ENCODE measurements at regions of chr2 and their contacts with region 1.

Region 1: GRCh38 chr2:88669371-88670214 is 21.9 kb upstream of the RPIA start:
- DNase-seq: peak; percentile 72
- ATAC-seq: peak; percentile 78
- H3K4me3 ChIP-seq: no peak overlapping the region
- H3K4me3 Mint-ChIP-seq: no peak overlapping the region
- H3K27ac ChIP-seq: no peak overlapping the region
- H3K27ac Mint-ChIP-seq: no peak overlapping the region
- H3K4me1 ChIP-seq: peaks cover 0 to 3% of the 10 kb centered on the region in 2 donors
- H3K4me1 Mint-ChIP-seq: peaks cover 5% of the 10 kb centered on the region
- H3K27me3 ChIP-seq: no peaks in the 10 kb centered on the region
- H3K27me3 Mint-ChIP-seq: no peaks in the 10 kb centered on the region
- CTCF ChIP-seq: peak; percentile 81

Region 2: GRCh38 chr2:88055371-88056128 is 614.0 kb before region 1 on chr2 and contains the start of gene KRCC1:
- CTCF ChIA-PET with region 1: interaction called, 5 read pairs
- POLR2A ChIA-PET with region 1: no interaction called
- intact Hi-C with region 1: loop called (anchors 5 kb)
- DNase-seq: peak; percentile 97
- ATAC-seq: peak; percentile 95
- H3K4me3 ChIP-seq: peak within 1 kb of the TSS; percentile 73 to 95 (median 89)
- H3K4me3 Mint-ChIP-seq: peak within 1 kb of the TSS; percentile 98
- H3K27ac ChIP-seq: peak within 1 kb of the TSS; percentile 95 to 96
- H3K27ac Mint-ChIP-seq: peak within 1 kb of the TSS; percentile 97
- H3K4me1 ChIP-seq: peaks cover 20 to 22% of the 10 kb centered on the region in 2 donors
- H3K4me1 Mint-ChIP-seq: peaks cover 39% of the 10 kb centered on the region
- H3K27me3 ChIP-seq: no peaks in the 10 kb centered on the region
- H3K27me3 Mint-ChIP-seq: no peaks in the 10 kb centered on the region
- CTCF ChIP-seq: no peak
- total RNA-seq, gene KRCC1: 27.1 and 27.2 TPM in 2 replicates

Region 3: DNA sequence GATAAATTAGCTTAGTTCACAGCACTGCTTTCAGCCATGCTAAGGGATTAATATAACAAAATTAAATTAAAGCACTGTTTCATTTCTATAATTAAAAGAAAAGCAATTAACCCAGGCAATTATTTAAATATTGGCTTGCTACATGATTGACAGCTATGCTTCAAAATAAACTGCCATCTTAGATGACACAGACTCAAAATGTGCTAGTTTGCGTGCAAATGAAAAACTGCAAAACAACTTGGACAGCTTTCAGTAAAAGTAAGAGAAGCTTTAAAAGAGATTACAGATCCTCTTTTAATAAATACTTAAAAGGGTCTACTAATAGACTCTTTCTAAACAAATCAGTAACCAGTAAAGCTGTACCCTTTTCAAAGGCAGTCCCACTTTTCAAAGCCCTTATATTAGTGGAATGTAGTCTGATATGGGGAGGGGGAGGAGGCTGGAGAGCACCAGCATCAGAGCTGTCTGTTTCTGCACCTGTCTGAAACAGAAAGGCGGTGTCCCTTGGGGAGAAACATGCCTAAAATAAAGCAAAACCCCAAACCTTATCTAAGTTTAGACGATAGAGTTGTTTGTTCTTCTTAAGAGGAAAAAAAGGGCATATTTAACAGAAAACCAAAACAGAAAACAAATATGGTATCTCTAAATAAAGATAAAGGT is 63.1 kb before region 1 on chr2:
- CTCF ChIA-PET with region 1: interaction called, 52 read pairs
- POLR2A ChIA-PET with region 1: no interaction called
- intact Hi-C with region 1: no loop called
- DNase-seq: peak; percentile 72
- ATAC-seq: peak; percentile 93
- H3K4me3 ChIP-seq: peak overlapping the region in 2 of 5 experiments; percentile 1 to 28
- H3K4me3 Mint-ChIP-seq: peak overlapping the region; percentile 57
- H3K27ac ChIP-seq: peak overlapping the region; percentile 86 to 94
- H3K27ac Mint-ChIP-seq: peak overlapping the region; percentile 94
- H3K4me1 ChIP-seq: peaks cover 78 to 89% of the 10 kb centered on the region in 2 donors
- H3K4me1 Mint-ChIP-seq: peaks cover 76% of the 10 kb centered on the region
- H3K27me3 ChIP-seq: no peaks in the 10 kb centered on the region
- H3K27me3 Mint-ChIP-seq: no peaks in the 10 kb centered on the region
- CTCF ChIP-seq: no peak

Region 4: DNA sequence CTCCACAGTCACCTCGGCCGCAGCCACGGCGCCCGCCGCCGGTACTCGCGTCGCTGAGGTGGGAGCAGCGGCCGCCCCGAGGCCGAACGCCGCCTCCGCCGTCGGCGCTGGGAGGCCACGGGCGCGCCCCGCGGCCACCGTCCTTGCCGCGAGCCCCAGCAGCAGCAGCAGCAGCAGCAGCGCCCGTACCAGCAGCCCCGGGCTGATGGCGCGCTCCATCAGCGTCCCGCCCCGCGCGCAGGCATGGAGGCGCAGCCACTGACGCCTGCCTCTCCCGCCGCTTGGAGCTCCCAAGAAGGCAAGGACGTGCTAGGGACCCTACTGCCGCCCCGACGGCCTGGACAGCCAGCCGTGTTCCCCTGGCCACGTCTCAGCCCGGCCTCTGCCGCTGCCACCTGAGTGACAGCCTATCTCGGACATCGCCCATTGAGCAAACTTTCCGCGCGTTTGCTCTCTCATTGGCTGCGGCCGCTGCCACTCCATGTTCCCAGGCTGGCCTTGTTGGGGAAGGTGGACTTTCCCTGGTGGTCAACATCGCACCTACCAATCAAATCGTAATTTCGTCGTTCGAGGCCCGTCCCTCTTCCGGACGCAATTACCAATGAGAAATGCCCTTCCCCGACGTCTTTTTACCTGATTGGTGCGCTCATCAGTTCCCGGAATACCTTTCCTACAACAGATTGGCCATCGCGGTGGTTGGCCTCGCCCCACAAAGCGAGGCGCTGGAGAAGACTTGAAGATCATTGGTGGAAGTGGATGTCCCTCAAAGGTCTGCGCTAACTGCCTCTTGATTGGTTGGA is 42.3 kb before region 1 on chr2 and contains the start of gene EIF2AK3:
- CTCF ChIA-PET with region 1: interaction called, 49 read pairs
- POLR2A ChIA-PET with region 1: interaction called, 4 read pairs
- intact Hi-C with region 1: loop called (anchors 1 kb)
- DNase-seq: peak; percentile 100
- ATAC-seq: peak; percentile 83
- H3K4me3 ChIP-seq: peak within 1 kb of the TSS; percentile 75 to 95 (median 88)
- H3K4me3 Mint-ChIP-seq: peak within 1 kb of the TSS; percentile 96
- H3K27ac ChIP-seq: peak within 1 kb of the TSS; percentile 99
- H3K27ac Mint-ChIP-seq: peak within 1 kb of the TSS; percentile 96
- H3K4me1 ChIP-seq: peaks cover 43 to 50% of the 10 kb centered on the region in 2 donors
- H3K4me1 Mint-ChIP-seq: peaks cover 20% of the 10 kb centered on the region
- H3K27me3 ChIP-seq: no peaks in the 10 kb centered on the region
- H3K27me3 Mint-ChIP-seq: no peaks in the 10 kb centered on the region
- CTCF ChIP-seq: no peak
- total RNA-seq, gene EIF2AK3: 57.9 and 67.5 TPM in 2 replicates

Region 5: DNA sequence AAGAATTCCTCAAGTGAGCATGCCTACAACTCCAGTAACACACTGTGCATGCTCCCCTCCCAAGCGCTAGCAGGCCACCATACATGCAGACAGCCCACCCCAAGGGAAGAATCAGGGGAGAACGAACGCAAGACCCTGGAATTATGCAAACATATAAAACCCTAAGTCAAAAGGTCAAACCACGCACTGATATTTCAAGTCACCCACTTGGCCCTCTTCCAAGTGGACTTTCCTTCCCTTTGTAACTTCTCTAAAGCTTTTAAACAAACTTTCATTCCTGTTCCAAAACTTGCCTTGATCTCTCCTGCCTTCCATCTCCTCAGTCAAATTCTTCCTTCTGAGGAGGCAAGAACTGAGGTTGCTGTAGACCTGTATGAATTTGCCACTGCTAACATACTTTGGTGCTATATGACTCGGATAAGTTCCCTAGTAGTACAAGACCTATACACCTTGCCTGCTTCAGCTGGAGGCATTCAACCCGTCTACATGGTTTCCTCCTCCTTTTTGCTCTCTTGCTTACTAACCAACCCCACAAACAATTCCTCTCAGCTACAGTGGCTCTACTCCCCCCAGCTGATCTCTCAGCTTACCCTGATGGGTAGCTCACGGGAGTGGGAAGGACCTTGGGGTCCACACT is 10.8 kb after region 1 on chr2:
- CTCF ChIA-PET with region 1: interaction called, 18 read pairs
- POLR2A ChIA-PET with region 1: no interaction called
- intact Hi-C with region 1: no loop called
- DNase-seq: no peak
- ATAC-seq: no peak
- H3K4me3 ChIP-seq: no peak overlapping the region
- H3K4me3 Mint-ChIP-seq: no peak overlapping the region
- H3K27ac ChIP-seq: no peak overlapping the region
- H3K27ac Mint-ChIP-seq: no peak overlapping the region
- H3K4me1 ChIP-seq: no peaks in the 10 kb centered on the region
- H3K4me1 Mint-ChIP-seq: no peaks in the 10 kb centered on the region
- H3K27me3 ChIP-seq: no peaks in the 10 kb centered on the region
- H3K27me3 Mint-ChIP-seq: no peaks in the 10 kb centered on the region
- CTCF ChIP-seq: no peak

Measured in B cell (primary cell).